ENCODE measurements at regions of chr1 and their contacts with region 1.

Region 1: DNA sequence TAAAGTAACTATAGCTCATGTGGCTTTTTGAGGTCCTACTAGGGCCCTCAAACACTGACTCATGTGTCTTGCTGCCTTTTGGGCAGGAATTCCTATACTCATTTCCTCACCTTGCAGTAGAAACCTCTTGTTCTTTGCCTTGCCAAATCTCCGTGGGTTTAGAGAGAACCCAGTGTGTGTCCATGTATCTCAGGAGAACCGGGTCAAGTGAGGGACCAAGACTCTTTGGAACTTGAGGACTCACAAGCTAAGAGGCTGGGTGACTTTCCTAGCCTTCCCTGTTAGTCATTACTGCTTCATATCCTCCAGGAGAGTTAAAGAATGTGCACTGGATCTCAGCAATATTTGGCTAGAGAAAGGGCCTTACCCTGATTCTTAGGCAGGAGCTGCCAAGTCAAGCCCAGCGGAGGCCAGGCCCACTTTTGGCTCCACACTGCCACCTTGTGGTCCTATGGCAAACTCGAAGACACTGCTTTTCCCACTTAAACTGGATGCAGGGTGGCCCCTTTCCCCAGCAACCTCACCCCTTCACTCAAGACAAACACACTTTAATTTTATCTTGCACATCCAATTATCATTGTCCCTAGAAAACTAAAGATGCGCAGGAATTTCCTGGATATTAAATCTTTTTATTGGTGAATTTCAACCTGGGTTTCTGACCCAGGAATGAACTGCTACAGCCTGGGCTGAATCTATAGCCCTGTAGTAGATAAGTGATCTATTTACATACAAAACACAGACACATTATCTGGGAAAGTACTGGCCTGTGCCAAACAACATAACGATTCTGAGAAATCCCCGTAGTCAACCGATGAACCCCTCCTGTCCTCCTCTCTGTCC is 10.6 kb downstream of the AVPR1B start:
- DNase-seq: peak; percentile 74 to 80
- H3K4me3 ChIP-seq: no peak overlapping the region
- H3K4me3 Mint-ChIP-seq: no peak overlapping the region
- H3K27ac Mint-ChIP-seq: no peak overlapping the region
- H3K4me1 ChIP-seq: no peaks in the 10 kb centered on the region
- H3K4me1 Mint-ChIP-seq: no peaks in the 10 kb centered on the region
- H3K27me3 ChIP-seq: no peaks in the 10 kb centered on the region
- H3K27me3 Mint-ChIP-seq: peaks cover 4% of the 10 kb centered on the region
- CTCF ChIP-seq: peak; percentile 87 to 88

Region 2: DNA sequence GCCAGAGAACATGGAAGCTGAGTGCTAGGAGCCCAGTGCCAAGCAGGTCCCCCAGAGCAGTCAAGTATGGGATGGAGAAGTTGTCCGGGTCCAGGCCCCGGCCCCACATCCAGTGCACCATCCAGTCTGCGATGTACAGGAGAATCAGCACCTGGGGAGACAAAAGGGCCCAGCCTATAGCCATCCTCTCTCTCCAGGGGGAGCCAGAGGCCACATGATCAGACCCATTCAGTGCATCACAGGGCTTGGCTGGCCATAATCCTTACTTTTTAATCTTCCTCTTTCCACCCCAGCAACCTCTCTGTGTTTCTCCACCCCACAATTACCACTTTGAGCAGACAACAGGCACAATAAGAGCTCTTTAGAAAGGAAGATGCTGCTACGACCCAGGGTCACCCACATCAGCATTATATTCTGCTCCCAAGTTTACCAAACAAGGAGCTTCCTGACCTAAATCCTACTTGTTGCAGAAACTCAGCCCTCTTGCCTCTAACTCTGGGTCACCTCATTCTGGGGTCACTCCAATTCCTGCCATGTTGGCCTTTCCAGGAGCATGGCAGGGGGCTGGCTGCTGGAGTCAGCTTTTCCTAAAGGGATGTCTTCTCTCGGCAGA is 314.9 kb before region 1 on chr1:
- CTCF ChIA-PET with region 1: interaction called, 6 read pairs
- POLR2A ChIA-PET with region 1: no interaction called
- intact Hi-C with region 1: loop called (anchors 1 kb)
- DNase-seq: peak; percentile 56 to 75
- H3K4me3 ChIP-seq: no peak overlapping the region
- H3K4me3 Mint-ChIP-seq: no peak overlapping the region
- H3K27ac Mint-ChIP-seq: no peak overlapping the region
- H3K4me1 ChIP-seq: no peaks in the 10 kb centered on the region
- H3K4me1 Mint-ChIP-seq: no peaks in the 10 kb centered on the region
- H3K27me3 ChIP-seq: no peaks in the 10 kb centered on the region
- H3K27me3 Mint-ChIP-seq: no peaks in the 10 kb centered on the region
- CTCF ChIP-seq: peak; percentile 90

Region 3: GRCh38 chr1:205919026-205919746 is 187.4 kb before region 1 on chr1:
- CTCF ChIA-PET with region 1: interaction called, 11 read pairs
- POLR2A ChIA-PET with region 1: no interaction called
- intact Hi-C with region 1: loop called (anchors 1 kb)
- DNase-seq: peak; percentile 77
- H3K4me3 ChIP-seq: no peak overlapping the region
- H3K4me3 Mint-ChIP-seq: no peak overlapping the region
- H3K27ac Mint-ChIP-seq: no peak overlapping the region
- H3K4me1 ChIP-seq: peaks cover 4% of the 10 kb centered on the region
- H3K4me1 Mint-ChIP-seq: no peaks in the 10 kb centered on the region
- H3K27me3 ChIP-seq: no peaks in the 10 kb centered on the region
- H3K27me3 Mint-ChIP-seq: no peaks in the 10 kb centered on the region
- CTCF ChIP-seq: peak; percentile 84 to 89

Region 4: GRCh38 chr1:205977402-205978014 is 129.0 kb before region 1 on chr1:
- CTCF ChIA-PET with region 1: interaction called, 14 read pairs
- POLR2A ChIA-PET with region 1: no interaction called
- intact Hi-C with region 1: no loop called
- DNase-seq: peak; percentile 74 to 81
- H3K4me3 ChIP-seq: no peak overlapping the region
- H3K4me3 Mint-ChIP-seq: no peak overlapping the region
- H3K27ac Mint-ChIP-seq: no peak overlapping the region
- H3K4me1 ChIP-seq: 0 out of 2 replicates have a peak, but pooled peaks cover 5% of the 10 kb centered on the region
- H3K4me1 Mint-ChIP-seq: no peaks in the 10 kb centered on the region
- H3K27me3 ChIP-seq: no peaks in the 10 kb centered on the region
- H3K27me3 Mint-ChIP-seq: peaks cover 9% of the 10 kb centered on the region
- CTCF ChIP-seq: peak; percentile 94 to 97

Region 5: DNA sequence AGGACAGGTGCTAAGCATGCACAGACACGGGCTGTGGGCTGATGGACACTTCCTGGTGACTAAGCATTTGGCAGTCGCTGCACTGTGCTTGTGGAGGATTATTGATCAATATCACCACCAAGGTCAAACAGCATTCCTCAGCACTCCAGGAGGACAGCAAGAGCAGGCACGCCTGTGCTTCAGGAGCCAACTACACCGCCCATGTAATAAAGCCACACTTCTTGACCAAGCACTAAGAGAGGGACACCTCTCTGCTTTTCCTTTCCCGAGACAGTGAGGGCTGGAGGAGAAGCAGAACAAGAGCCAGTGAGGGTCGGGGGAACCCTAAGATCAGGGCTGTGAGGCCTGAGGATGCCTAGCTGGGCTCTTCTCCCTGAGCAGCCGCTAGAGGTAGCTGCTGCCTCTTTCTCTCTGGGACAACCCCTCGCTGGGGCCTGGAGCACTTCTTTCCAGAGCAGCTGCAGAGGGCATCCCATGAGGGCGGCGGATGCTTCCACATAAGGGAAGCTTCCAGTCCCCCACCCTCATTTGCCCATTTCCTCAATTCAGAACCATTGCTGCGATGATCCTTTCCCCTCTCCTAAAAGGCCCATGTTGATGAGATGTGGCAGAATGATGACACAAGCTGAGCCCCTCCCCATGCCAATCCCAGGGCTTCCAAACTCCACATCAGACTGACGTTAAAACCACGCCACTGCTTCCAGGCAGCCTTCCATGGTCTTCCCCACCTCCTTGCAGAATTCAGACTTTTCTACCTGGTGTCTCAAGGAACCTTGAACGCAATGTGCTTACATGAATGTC is 122.4 kb before region 1 on chr1:
- CTCF ChIA-PET with region 1: interaction called, 56 read pairs
- POLR2A ChIA-PET with region 1: no interaction called
- intact Hi-C with region 1: loop called (anchors 1 kb)
- DNase-seq: peak; percentile 53 to 62
- H3K4me3 ChIP-seq: no peak overlapping the region
- H3K4me3 Mint-ChIP-seq: no peak overlapping the region
- H3K27ac Mint-ChIP-seq: no peak overlapping the region
- H3K4me1 ChIP-seq: 0 out of 2 replicates have a peak, but pooled peaks cover 4% of the 10 kb centered on the region
- H3K4me1 Mint-ChIP-seq: no peaks in the 10 kb centered on the region
- H3K27me3 ChIP-seq: no peaks in the 10 kb centered on the region
- H3K27me3 Mint-ChIP-seq: peaks cover 7% of the 10 kb centered on the region
- CTCF ChIP-seq: peak; percentile 57 to 83

Region 6: GRCh38 chr1:206030714-206031113 is 75.8 kb before region 1 on chr1:
- CTCF ChIA-PET with region 1: interaction called, 87 read pairs
- POLR2A ChIA-PET with region 1: no interaction called
- intact Hi-C with region 1: loop called (anchors 1 kb)
- DNase-seq: peak; percentile 82 to 86
- H3K4me3 ChIP-seq: no peak overlapping the region
- H3K4me3 Mint-ChIP-seq: no peak overlapping the region
- H3K27ac Mint-ChIP-seq: no peak overlapping the region
- H3K4me1 ChIP-seq: peaks cover 10% of the 10 kb centered on the region
- H3K4me1 Mint-ChIP-seq: peaks cover 5% of the 10 kb centered on the region
- H3K27me3 ChIP-seq: no peaks in the 10 kb centered on the region
- H3K27me3 Mint-ChIP-seq: peaks cover 7% of the 10 kb centered on the region
- CTCF ChIP-seq: peak; percentile 79 to 97

Measured in Caco-2 (cell line).